Activated CD4-positive, alpha-beta memory T cell treated with anti-CD3 and anti-CD28 coated beads, Interleukin-2, amount 10 ng/mL, durations not matched to agents 7 days and 5 days (primary cell): ENCODE measurements at regions of chr1 and their contacts with region 1.

Region 1: GRCh38 chr1:86380257-86380861 is 15.8 kb downstream of the ODF2L start:
- DNase-seq: no peak
- H3K4me3 Mint-ChIP-seq: no peak overlapping the region
- H3K27ac Mint-ChIP-seq: no peak overlapping the region
- H3K4me1 Mint-ChIP-seq: peaks cover 17% of the 10 kb centered on the region
- H3K27me3 Mint-ChIP-seq: no peaks in the 10 kb centered on the region

Region 2: DNA sequence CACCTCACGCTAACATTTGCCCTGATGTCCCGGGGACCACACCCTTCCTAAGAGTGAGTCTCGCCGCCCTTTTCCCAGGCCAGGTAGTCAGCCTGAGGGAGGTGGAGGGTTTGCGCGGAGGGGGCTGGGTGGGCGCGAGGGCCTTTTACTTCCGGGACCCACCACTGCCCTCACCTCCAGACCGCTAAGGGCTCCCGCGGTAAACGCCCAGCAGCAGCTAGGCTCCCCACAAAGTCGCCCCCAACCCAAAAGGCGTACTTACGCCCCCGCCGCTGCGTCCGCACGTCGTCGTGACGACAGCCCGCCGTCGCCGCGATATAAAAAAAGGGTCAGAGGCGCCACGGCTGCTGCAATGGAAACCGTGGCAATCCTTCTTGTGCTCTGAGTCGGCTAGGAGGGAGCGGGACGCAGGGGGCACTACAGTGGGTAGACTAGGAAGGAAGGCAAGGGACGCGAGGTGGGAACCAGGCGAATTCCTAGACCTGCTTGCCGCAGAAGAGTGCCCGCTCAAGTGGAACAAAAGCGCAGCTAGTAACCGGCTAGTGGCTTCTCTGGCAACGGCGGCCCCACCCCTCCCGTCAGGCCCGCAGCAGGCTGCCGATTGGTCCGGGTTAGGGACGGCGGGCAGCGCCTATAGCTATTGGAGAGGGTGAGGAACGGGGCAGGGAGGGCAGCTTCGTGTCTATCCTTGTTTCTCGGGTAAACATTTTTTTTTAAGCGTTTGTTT is 15.6 kb after region 1 on chr1 and contains the start of gene ODF2L:
- CTCF ChIA-PET with region 1: interaction called, 11 read pairs
- POLR2A ChIA-PET with region 1: interaction called, 41 read pairs
- DNase-seq: peak; percentile 94
- H3K4me3 Mint-ChIP-seq: peak within 1 kb of the TSS; percentile 95
- H3K27ac Mint-ChIP-seq: peak within 1 kb of the TSS; percentile 90
- H3K4me1 Mint-ChIP-seq: peaks cover 53% of the 10 kb centered on the region
- H3K27me3 Mint-ChIP-seq: no peaks in the 10 kb centered on the region
- total RNA-seq, gene ODF2L: 63.1 to 71.3 TPM